ENCODE measurements at regions of chr5 and their contacts with region 1.

Region 1: DNA sequence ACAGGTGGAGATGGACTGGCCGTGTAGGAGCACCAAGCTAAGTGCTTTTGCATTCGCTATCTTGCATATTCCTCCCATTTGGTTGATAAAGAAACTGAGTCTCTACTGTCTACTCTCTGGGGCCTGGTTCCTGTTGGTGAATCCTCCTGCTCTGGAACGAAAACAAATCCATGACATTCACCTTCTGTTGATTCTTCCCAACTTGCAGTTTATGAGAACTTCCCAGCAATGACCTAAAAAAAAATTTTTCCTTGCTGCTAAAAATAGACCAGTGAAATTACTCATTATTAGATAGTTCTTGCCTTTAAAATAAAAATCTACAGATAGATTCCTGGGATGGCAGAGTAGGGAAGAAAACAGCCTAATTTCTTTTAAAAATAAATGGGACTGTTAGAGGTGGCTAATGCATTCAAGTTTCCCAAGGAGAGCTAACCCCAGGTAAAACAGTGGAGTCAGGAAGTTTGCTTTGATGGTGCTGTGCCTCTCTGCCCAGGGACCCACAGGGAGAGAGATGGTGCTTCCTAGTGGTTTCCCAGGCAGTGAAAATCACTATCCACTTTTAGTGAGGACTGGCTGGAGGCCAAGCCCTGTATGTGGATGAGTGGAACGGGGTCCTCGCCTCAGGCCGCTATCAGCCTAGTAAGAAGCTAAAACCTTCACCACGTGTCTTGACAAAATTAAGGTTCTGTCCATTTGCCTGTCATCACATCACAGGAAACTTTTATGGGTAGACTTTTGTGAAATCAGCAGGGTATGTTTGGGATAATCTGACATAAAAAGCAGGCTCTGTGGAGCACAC is 68.4 kb upstream of the NR3C1 start:
- DNase-seq: no peak
- H3K4me3 ChIP-seq: no peak overlapping the region
- H3K27ac ChIP-seq: peak overlapping the region; percentile 40
- H3K27me3 ChIP-seq: no peaks in the 10 kb centered on the region
- CTCF ChIP-seq: no peak

Region 2: DNA sequence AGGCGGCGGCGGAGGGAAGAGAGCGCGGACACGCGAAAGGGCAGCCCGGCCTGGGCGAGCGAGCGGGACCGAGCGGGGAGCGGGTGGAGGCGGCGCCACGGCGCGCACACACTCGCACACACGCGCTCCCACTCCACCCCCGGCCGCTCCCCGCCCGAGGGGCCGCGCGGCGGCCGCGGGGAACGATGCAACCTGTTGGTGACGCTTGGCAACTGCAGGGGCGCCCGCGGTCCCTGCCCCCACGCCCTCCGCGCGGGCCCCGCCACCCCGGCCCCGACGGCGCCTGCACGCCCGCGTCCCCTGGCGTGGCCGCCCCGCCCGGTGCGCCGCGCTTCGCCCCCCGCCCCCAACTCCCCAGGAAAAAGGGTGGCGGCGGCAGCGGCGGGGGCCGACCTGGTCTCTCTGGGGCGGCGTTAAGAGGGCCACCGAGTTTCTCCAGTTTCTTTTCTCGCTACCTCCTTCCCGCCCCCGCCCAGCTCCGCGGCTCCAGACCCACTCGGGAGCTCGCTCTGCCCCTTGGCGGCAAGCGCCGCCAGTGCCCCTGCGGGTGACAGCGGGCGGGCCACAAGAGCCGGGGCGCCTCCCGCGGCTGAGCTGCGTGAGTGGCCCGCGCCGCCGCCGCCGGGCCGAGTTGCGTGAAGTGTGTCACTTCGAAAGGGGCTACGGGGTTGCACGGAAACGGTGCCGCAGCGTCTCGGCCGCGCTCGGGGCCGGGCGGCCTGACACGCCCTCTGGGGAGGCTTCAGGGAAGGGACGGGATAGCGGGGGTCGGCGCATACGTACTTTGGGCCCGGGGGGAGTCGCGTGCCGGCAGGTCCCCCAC is 68.1 kb before region 1 on chr5 and contains the start of gene NR3C1:
- CTCF ChIA-PET with region 1: no interaction called
- POLR2A ChIA-PET with region 1: interaction called, 10 read pairs
- DNase-seq: peak; percentile 44
- H3K4me3 ChIP-seq: peak within 1 kb of the TSS; percentile 70
- H3K27ac ChIP-seq: peak within 1 kb of the TSS; percentile 77
- H3K27me3 ChIP-seq: no peaks in the 10 kb centered on the region
- CTCF ChIP-seq: peak; percentile 48
- polyA plus RNA-seq, gene NR3C1: 34.7 and 44.1 TPM in 2 replicates

Measured in AG04450 (cell line).